A549 (cell line): ENCODE measurements at regions of chr11 and their contacts with region 1.

Region 1: GRCh38 chr11:65497141-65498041 is 1.5 kb upstream of the MALAT1 start:
- DNase-seq: peak; percentile 74 to 99
- ATAC-seq: peak; percentile 72 to 79
- H3K4me3 ChIP-seq: peak overlapping the region; percentile 90
- H3K27ac ChIP-seq: peak overlapping the region; percentile 98 to 100
- H3K4me1 ChIP-seq: peaks cover 53% of the 10 kb centered on the region
- CTCF ChIP-seq: no peak
- EP300 ChIP-seq: peak; percentile 44 to 85; a peak in 3 of 5 replicates
- POLR2A ChIP-seq: 0 out of 2 replicates have a peak, but pooled peaks have one; percentile 13
- RAD21 ChIP-seq: peak; percentile 18 to 67; a peak in 4 of 5 replicates

Region 2: DNA sequence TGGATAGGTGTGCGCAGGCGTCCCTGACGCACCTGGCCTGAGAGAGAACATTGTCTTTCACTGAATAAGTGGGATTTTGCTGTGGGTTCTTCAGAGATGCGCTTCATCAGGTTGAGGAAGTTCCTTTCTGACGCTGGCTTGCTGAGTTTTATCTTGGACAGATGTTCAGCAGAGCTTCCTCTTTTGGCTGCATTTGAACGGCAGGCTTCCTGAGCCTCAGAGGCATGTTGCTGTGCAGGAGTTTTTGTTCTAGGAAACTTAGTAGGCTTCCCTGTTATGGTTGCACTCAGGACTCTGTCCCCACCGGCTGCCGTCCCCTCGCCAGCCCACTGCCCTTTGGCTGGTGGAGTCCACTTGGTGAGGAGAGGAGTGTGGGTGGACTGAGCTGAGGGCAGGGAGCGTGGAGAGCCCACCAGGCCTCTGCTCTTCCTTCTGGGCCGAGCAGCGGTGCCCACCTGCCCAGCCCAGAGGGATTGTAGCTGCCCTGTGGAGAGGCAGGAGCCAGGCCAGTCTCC is 93.7 kb before region 1 on chr11:
- CTCF ChIA-PET with region 1: no interaction called
- POLR2A ChIA-PET with region 1: no interaction called
- DNase-seq: no peak
- ATAC-seq: peak in 1 of 2 experiments; percentile 7; a peak in 1 of 6 replicates
- H3K4me3 ChIP-seq: no peak overlapping the region
- H3K27ac ChIP-seq: no peak overlapping the region
- H3K4me1 ChIP-seq: 0 out of 3 replicates have a peak, but pooled peaks cover 4% of the 10 kb centered on the region
- CTCF ChIP-seq: no peak
- EP300 ChIP-seq: no peak
- POLR2A ChIP-seq: no peak
- RAD21 ChIP-seq: no peak

Region 3: DNA sequence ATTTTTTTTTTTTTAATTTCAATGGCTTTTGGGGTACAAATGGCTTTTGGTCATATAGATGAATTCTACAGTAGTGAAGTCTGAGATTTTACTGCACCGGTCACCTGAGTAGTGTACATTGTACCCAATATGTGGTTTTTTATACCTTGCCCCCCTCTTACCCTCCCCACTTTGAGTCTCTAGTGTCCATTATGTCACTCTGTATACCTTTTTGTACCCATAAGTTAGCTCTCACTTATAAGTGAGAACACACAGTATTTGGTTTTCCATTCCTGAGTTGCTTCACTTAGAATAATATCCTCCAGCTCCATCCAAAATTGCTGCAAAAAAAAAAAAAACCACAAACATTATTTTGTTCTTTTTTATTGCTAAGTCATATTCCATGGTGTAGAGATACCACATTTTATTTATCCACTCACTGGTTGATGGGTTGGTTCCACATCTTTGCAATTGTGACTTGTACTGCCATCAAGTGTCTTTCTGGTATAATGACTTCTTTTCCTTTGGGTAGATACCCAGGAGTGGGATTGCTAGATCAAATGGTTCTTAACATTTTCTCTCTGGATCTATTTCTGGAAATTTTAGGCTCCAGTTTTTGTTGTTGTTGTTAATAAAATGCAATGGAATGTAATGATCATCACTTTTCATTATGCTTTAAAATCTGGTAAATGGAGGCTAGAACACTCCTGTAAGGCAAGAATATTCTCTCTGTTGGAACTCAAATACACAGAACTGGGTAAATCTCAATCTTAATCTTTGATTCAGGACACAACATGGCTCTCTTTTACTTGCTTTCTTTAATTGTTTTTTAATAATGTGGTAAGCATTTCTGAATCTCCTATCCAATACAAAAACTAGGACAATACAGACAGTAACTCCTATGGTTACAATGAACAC is 64.5 kb before region 1 on chr11:
- CTCF ChIA-PET with region 1: interaction called, 13 read pairs
- POLR2A ChIA-PET with region 1: interaction called, 756 read pairs
- DNase-seq: peak in 1 of 2 experiments; percentile 75
- ATAC-seq: no peak
- H3K4me3 ChIP-seq: no peak overlapping the region
- H3K27ac ChIP-seq: peak overlapping the region; percentile 43 to 55; a peak in 4 of 6 replicates
- H3K4me1 ChIP-seq: peaks cover 85% of the 10 kb centered on the region
- CTCF ChIP-seq: peak; percentile 52
- EP300 ChIP-seq: no peak
- POLR2A ChIP-seq: no peak
- RAD21 ChIP-seq: peak; percentile 58 to 59

Region 4: GRCh38 chr11:65448418-65449105 is 48.8 kb before region 1 on chr11:
- CTCF ChIA-PET with region 1: interaction called, 3 read pairs
- POLR2A ChIA-PET with region 1: interaction called, 58 read pairs
- DNase-seq: peak in 1 of 2 experiments; percentile 64
- ATAC-seq: peak; percentile 6 to 24; a peak in 5 of 6 replicates
- H3K4me3 ChIP-seq: no peak overlapping the region
- H3K27ac ChIP-seq: peak overlapping the region in 1 of 2 experiments; percentile 76; a peak in 3 of 6 replicates
- H3K4me1 ChIP-seq: peaks cover 71% of the 10 kb centered on the region
- CTCF ChIP-seq: no peak
- EP300 ChIP-seq: no peak
- POLR2A ChIP-seq: no peak
- RAD21 ChIP-seq: no peak

Region 5: DNA sequence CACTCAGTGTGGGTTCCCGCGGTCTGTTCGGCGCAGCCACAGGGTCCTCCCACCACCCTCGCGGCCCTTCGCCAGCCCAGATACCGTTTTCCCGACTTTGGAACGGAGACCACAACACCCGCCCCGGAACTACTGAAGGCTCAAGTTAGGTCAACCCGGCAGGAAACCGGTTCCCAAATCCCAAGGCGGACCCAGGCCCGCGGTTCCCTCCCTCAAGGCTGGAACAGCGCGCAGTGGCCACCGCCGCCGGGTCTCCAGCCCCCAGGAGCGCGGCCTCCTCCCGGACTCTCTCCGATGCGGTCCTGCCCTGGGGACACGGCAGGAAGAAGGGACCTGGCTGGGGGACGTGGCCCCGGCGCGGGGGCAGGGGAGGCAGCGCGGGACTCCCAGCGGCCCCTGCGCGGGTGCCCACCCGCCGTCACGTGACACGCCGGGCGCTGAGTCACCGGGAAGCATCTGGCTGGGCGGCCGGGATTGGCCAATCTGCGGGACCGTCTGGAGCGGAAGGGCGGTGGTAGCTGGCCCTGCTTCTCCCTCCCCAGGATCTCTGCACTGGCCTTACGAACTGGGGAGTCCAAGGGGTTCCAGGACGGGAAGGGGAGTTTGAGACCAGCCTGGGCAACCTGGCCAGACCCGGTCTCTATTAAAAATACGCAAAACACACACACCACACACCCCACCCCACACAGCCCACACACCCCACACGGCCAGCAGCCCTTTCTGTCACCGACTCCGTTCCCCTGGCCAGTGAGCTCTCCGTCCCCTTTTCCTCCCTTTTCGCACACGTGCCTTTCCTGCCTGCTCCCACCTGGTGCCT is 20.0 kb before region 1 on chr11:
- CTCF ChIA-PET with region 1: interaction called, 947 read pairs
- POLR2A ChIA-PET with region 1: interaction called, 1,006 read pairs
- DNase-seq: peak; percentile 94 to 95
- ATAC-seq: peak; percentile 82 to 84
- H3K4me3 ChIP-seq: peak overlapping the region; percentile 54
- H3K27ac ChIP-seq: peak overlapping the region; percentile 93 to 99
- H3K4me1 ChIP-seq: peaks cover 79% of the 10 kb centered on the region
- CTCF ChIP-seq: no peak
- EP300 ChIP-seq: peak in 1 of 2 experiments; percentile 24; a peak in 1 of 5 replicates
- POLR2A ChIP-seq: peak; percentile 36
- RAD21 ChIP-seq: peak; percentile 0 to 28; a peak in 2 of 5 replicates

Region 6: DNA sequence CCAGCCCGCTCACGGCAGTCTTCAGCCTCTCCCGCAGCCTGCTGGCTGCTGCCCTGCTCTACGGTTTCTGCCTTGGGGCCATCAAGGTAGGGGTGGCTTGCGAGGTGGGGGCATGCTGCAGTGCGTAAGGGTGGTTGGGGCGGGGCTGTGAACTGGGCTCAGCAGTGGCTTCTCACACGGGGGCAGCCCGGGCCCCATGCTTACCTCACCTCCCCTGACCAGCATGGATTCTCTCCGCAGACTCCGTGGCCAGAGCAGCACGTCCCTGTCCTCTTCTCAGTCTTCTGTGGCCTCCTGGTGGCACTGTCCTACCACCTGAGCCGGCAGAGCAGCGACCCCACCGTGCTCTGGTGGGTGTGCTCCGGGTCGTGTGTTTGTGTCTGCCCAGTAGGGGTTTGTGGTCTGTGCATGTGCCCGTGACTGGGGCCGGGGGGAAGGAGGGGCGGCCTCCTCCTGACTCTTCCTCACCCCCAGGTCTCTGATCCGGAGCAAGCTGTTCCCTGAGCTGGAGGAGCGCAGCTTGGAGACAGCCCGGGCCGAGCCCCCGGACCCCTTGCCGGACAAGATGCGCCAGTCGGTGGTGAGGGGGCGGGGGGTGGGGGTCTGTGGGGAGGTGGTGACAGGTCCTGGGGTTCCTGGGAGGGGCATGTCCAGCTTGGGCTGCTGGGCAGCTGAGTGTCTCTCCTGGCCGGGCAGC is 127.7 kb after region 1 on chr11:
- CTCF ChIA-PET with region 1: no interaction called
- POLR2A ChIA-PET with region 1: no interaction called
- DNase-seq: no peak
- ATAC-seq: peak; percentile 4 to 6; a peak in 2 of 6 replicates
- H3K4me3 ChIP-seq: no peak overlapping the region
- H3K27ac ChIP-seq: no peak overlapping the region
- H3K4me1 ChIP-seq: no peaks in the 10 kb centered on the region
- CTCF ChIP-seq: no peak
- EP300 ChIP-seq: no peak
- POLR2A ChIP-seq: no peak
- RAD21 ChIP-seq: no peak